ENCODE measurements at regions of chr10 and their contacts with region 1.

Region 1: DNA sequence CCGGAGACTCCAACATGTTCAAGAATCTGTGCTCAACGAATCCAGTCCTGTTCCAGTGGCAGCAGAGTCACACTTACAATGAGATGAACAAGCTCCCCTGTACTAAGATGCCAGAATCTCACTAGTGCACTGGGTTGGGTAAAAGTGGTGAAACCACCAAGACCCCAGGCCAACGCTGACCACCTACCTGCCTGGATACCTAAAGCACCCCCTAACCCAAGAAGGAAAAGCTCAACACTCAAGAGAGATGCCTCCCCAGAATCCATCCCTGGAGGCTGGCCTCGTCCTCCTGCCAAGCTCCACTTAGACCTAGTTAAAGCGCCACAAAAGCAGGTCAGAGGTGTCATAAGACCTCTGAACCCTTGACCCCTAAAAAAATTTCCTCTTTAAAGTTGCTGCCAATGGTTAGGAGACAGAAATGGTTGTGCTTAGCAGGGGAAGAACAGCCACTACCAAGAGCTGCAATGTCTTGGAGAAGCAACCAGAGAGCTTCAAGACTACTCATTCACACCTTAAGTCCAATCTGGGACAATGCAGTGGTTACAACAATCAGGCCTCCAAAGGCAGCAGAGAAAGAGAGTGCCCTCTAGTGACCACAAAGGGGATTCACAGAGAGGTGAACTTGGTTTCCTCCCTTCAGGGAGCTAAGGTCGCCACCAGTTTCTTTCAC is 94.6 kb upstream of the MACROH2A2 start:
- DNase-seq: peak; percentile 34
- ATAC-seq: peak; percentile 82
- H3K4me3 Mint-ChIP-seq: no peak overlapping the region
- H3K27ac Mint-ChIP-seq: no peak overlapping the region
- H3K4me1 Mint-ChIP-seq: peaks cover 2% of the 10 kb centered on the region
- H3K27me3 Mint-ChIP-seq: peaks cover 10% of the 10 kb centered on the region
- CTCF ChIP-seq: peak; percentile 60

Region 2: GRCh38 chr10:69769395-69769992 is 188.5 kb before region 1 on chr10:
- CTCF ChIA-PET with region 1: interaction called, 10 read pairs
- POLR2A ChIA-PET with region 1: no interaction called
- DNase-seq: peak; percentile 64
- ATAC-seq: peak; percentile 86
- H3K4me3 Mint-ChIP-seq: no peak overlapping the region
- H3K27ac Mint-ChIP-seq: no peak overlapping the region
- H3K4me1 Mint-ChIP-seq: peaks cover 12% of the 10 kb centered on the region
- H3K27me3 Mint-ChIP-seq: peaks cover 9% of the 10 kb centered on the region
- CTCF ChIP-seq: no peak

Region 3: GRCh38 chr10:69861251-69862240 is 96.5 kb before region 1 on chr10:
- CTCF ChIA-PET with region 1: interaction called, 11 read pairs
- POLR2A ChIA-PET with region 1: no interaction called
- DNase-seq: no peak
- ATAC-seq: peak; percentile 73
- H3K4me3 Mint-ChIP-seq: no peak overlapping the region
- H3K27ac Mint-ChIP-seq: no peak overlapping the region
- H3K4me1 Mint-ChIP-seq: peaks cover 59% of the 10 kb centered on the region
- H3K27me3 Mint-ChIP-seq: peaks cover 9% of the 10 kb centered on the region
- CTCF ChIP-seq: no peak

Region 4: GRCh38 chr10:69901628-69902505 is 56.2 kb before region 1 on chr10:
- CTCF ChIA-PET with region 1: interaction called, 10 read pairs
- POLR2A ChIA-PET with region 1: no interaction called
- DNase-seq: peak; percentile 77
- ATAC-seq: peak; percentile 86
- H3K4me3 Mint-ChIP-seq: no peak overlapping the region
- H3K27ac Mint-ChIP-seq: peak overlapping the region; percentile 86
- H3K4me1 Mint-ChIP-seq: peaks cover 35% of the 10 kb centered on the region
- H3K27me3 Mint-ChIP-seq: peaks cover 3% of the 10 kb centered on the region
- CTCF ChIP-seq: peak; percentile 61; the same call in 1 of the 2 replicates

Region 5: GRCh38 chr10:69968830-69969229 is 10.8 kb after region 1 on chr10:
- CTCF ChIA-PET with region 1: interaction called, 18 read pairs
- POLR2A ChIA-PET with region 1: no interaction called
- DNase-seq: peak; percentile 51
- ATAC-seq: peak; percentile 91
- H3K4me3 Mint-ChIP-seq: no peak overlapping the region
- H3K27ac Mint-ChIP-seq: no peak overlapping the region
- H3K4me1 Mint-ChIP-seq: peaks cover 6% of the 10 kb centered on the region
- H3K27me3 Mint-ChIP-seq: peaks cover 34% of the 10 kb centered on the region
- CTCF ChIP-seq: no peak

Region 6: DNA sequence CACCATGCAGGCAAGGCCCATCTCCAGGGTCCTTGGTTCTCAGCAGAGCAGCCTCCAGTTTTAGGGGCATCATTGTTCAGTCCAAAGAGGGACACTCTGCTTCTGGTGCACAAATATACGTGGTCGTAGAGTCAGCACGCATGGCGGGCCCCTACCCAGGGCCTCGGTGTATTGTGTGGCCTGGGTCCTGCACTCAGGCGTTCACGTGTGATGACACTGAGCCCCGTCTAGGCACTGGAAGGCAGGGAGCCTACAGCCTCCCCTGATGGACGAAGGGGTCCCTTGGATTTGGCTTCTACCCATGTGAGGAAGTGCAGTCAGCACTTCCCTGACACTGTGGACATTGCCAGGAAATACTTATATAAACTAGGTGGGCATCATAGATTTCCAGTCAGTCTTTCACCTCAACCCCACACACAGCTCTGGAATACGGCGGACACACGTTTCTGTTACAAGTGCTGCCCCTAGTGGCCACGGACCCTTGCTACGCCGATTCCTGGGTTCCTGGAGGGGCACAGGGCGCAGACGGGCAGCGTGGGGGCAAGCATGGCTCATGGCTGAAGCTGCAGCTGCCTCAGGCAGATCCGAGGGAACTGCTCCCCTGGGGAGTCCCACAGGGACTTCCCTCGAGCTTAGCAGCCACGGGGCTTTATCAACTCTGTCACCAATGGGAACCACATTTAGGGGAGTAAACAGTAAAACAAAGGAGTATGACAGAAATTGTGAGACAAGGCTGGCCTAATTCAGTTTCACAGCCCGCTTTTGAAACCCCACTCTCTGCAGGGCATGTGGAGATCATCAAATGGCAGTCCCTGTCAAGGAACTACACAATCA is 149.2 kb after region 1 on chr10:
- CTCF ChIA-PET with region 1: interaction called, 14 read pairs
- POLR2A ChIA-PET with region 1: no interaction called
- DNase-seq: peak; percentile 85
- ATAC-seq: peak; percentile 99
- H3K4me3 Mint-ChIP-seq: no peak overlapping the region
- H3K27ac Mint-ChIP-seq: no peak overlapping the region
- H3K4me1 Mint-ChIP-seq: peaks cover 11% of the 10 kb centered on the region
- H3K27me3 Mint-ChIP-seq: no peaks in the 10 kb centered on the region
- CTCF ChIP-seq: peak; percentile 70

Measured in WTC11 (cell line).